MCF 10A (cell line): ENCODE measurements at regions of chr14 and their contacts with region 1.

Region 1: GRCh38 chr14:35159742-35160409 is 37.5 kb downstream of the PRORP start:
- DNase-seq: peak; percentile 92
- H3K4me3 Mint-ChIP-seq: peak overlapping the region; percentile 52
- H3K27ac Mint-ChIP-seq: peak overlapping the region; percentile 96
- H3K4me1 Mint-ChIP-seq: peaks cover 48% of the 10 kb centered on the region
- H3K27me3 Mint-ChIP-seq: no peaks in the 10 kb centered on the region
- CTCF ChIP-seq: no peak

Region 2: DNA sequence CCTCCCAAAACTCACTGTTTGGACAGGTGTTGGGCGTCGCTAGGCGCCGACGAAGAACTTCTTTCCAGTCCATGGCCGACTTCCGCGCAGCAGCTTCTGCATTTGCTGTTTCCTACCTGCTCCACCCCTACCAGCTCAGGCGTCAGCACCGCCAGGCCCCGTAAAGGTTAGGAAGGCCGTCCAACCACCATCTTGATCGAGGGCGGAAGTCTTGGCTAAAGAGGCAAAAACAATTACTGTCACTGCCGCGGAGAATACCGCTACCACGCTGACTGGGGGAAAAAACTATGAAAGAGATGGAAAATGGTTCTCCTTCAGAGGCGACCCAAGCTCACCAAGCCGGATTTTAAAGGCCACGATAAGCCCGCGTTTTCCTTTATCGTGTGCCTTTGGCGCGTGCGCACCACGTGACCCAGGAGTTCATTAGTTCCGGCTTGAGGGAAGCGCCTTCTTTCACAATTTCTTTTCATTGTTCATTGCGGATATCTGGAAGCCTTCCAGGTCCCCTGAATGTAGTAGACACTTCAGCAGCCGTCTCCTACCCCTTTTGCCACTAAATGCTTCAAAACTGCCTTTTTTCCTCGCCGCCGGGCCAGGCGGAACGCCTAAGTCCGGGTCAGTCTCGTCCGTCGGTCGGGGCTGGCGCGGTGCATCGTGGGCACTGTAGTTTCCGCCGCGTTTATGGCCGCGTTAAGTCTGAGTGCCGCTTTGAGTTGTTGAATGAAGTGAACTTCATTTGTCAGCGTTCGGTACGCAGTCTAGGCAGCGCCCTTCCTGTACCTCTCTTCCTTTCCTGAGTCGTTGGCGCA is 37.8 kb before region 1 on chr14 and contains the starts of genes PPP2R3C and PRORP:
- CTCF ChIA-PET with region 1: no interaction called
- POLR2A ChIA-PET with region 1: interaction called, 51 read pairs
- intact Hi-C with region 1: no loop called
- DNase-seq: peak; percentile 99
- H3K4me3 Mint-ChIP-seq: peak within 1 kb of the TSS; percentile 98
- H3K27ac Mint-ChIP-seq: peak within 1 kb of the TSS; percentile 100
- H3K4me1 Mint-ChIP-seq: peaks cover 31% of the 10 kb centered on the region
- H3K27me3 Mint-ChIP-seq: no peaks in the 10 kb centered on the region
- CTCF ChIP-seq: no peak
- total RNA-seq, gene PPP2R3C: 16.9 and 21.6 TPM in 2 replicates
- total RNA-seq, gene PRORP: 27.9 and 30.5 TPM in 2 replicates